Mammary epithelial cell (primary cell): ENCODE measurements at regions of chr20 and their contacts with region 1.

Region 1: DNA sequence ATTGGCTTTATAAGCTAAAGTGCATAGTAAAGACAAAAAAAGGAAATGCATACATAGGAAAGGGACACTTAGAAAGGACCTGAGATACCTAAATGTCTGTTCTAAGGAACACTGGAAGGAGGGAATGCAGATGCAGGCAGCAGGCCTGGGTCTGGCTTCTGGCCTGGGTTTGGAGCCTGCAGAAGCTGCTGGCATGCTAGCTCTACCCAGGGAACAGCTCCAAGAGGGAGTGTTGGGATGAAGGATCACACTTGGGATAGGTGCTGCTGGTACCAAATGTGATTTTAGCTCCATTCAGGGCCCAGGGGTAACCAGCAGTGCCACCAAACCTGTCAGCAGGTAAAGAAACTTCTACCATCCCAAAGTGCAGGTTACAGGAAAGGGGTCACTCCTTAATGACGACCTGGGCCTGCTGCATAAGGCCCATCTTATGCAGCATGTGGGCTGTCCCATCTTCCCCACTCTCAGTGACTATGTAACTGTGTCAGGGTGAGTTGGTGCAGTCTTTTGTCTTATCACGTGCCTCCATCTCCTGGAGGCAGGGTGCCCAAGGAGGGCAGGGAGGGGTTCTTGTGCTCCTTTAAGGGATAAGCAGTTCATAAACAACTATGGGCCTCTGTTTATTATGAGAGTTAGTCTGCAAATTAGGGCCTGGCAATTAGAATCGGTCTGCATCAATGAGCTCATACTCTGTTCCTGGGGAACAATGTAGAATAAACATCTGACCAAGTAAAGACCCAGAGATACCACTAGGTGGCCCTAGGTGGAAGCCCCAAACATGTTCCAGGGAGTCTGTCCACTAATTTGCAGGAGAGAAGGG is 26.9 kb downstream of the DDX27 start:
- DNase-seq: peak; percentile 35
- H3K4me3 ChIP-seq: no peak overlapping the region
- H3K27ac ChIP-seq: no peak overlapping the region
- H3K4me1 ChIP-seq: peaks cover 11% of the 10 kb centered on the region
- H3K27me3 ChIP-seq: no peaks in the 10 kb centered on the region
- CTCF ChIP-seq: peak; percentile 63 to 72

Region 2: DNA sequence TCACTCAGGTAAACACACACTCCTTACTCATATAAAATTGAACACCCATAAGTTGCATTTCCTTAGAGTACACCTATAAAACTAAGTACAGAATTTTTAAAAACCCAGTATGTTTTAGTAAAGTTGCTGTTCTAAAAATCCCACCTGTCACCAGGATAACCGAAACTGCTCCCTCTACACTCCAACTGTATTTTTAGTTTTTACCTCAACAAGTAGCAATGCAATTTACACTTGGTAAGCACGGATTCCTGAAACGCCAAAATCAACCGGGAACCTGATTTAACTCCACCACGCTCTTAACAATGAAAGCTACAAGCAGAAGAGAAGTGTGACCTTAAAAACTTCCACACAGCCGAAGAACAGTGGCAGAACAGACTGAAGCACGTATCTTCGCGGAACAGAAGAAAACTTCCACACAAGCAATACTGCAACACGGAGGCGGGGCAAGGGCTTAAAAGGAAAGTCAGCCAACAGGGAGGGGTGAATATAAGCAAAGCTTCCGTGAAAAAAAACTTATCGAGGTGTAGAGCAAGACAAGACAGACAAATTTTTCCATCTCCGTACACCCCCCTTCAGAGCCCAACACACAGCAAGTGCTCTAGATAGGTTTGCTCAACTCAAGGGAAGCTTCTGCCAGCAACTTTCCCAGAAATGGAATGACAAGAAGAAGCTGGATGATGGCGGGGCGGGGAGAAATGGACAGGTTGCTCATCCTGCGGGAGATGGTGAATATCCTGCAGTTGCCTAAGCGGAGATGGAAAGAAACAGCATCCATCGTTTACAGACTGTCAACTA is 59.4 kb before region 1 on chr20:
- CTCF ChIA-PET with region 1: no interaction called
- dilution Hi-C with region 1: loop called (anchors 10 kb)
- in situ Hi-C with region 1: no loop called
- intact Hi-C with region 1: no loop called
- DNase-seq: peak; percentile 66
- H3K4me3 ChIP-seq: peak overlapping the region; percentile 67 to 82 (median 79)
- H3K27ac ChIP-seq: peak overlapping the region; percentile 68
- H3K4me1 ChIP-seq: peaks cover 7% of the 10 kb centered on the region
- H3K27me3 ChIP-seq: no peaks in the 10 kb centered on the region
- CTCF ChIP-seq: no peak

Region 3: DNA sequence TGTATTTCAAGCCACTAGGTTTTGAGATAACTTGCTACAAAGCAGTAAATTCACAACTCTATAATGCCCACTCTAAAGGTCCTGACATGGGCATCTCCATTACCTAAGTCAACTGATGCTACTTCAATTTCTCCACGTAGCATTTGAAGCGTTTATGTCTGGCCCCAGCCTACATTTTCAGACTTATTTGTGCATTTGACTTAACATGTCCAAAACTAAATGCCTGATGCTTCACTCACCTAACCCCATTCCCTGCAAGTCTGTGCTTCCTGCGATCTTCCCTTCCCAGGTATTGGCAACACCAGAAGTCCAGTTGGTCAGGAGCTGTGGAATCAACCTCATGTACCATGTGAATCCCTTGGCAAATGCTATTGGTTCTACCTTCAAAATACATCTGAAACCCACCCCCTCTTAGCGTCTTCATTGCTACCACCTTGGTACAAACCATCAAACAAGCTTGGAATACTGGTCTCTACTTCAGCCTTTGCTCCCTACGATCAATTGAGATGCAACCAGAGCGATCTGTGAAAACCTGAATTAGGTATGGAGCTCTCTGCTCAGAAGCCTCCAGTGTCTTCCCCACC is 44.6 kb after region 1 on chr20:
- CTCF ChIA-PET with region 1: no interaction called
- dilution Hi-C with region 1: loop called (anchors 5 kb)
- in situ Hi-C with region 1: no loop called
- intact Hi-C with region 1: no loop called
- DNase-seq: no peak
- H3K4me3 ChIP-seq: no peak overlapping the region
- H3K27ac ChIP-seq: no peak overlapping the region
- H3K4me1 ChIP-seq: peaks cover 19% of the 10 kb centered on the region
- H3K27me3 ChIP-seq: no peaks in the 10 kb centered on the region
- CTCF ChIP-seq: no peak

Region 4: GRCh38 chr20:49323622-49324238 is 77.6 kb after region 1 on chr20:
- CTCF ChIA-PET with region 1: interaction called, 8 read pairs
- dilution Hi-C with region 1: no loop called
- in situ Hi-C with region 1: no loop called
- intact Hi-C with region 1: loop called (anchors 1 kb)
- DNase-seq: peak; percentile 73
- H3K4me3 ChIP-seq: no peak overlapping the region
- H3K27ac ChIP-seq: no peak overlapping the region
- H3K4me1 ChIP-seq: peaks cover 9% of the 10 kb centered on the region
- H3K27me3 ChIP-seq: peaks cover 16% of the 10 kb centered on the region
- CTCF ChIP-seq: peak; percentile 25 to 59

Region 5: GRCh38 chr20:49344975-49345374 is 98.8 kb after region 1 on chr20:
- CTCF ChIA-PET with region 1: no interaction called
- dilution Hi-C with region 1: no loop called
- in situ Hi-C with region 1: no loop called
- intact Hi-C with region 1: no loop called
- DNase-seq: peak; percentile 84
- H3K4me3 ChIP-seq: peak overlapping the region in 1 of 3 experiments; percentile 16
- H3K27ac ChIP-seq: peak overlapping the region; percentile 78
- H3K4me1 ChIP-seq: peaks cover 19% of the 10 kb centered on the region
- H3K27me3 ChIP-seq: no peaks in the 10 kb centered on the region
- CTCF ChIP-seq: no peak

Region 6: DNA sequence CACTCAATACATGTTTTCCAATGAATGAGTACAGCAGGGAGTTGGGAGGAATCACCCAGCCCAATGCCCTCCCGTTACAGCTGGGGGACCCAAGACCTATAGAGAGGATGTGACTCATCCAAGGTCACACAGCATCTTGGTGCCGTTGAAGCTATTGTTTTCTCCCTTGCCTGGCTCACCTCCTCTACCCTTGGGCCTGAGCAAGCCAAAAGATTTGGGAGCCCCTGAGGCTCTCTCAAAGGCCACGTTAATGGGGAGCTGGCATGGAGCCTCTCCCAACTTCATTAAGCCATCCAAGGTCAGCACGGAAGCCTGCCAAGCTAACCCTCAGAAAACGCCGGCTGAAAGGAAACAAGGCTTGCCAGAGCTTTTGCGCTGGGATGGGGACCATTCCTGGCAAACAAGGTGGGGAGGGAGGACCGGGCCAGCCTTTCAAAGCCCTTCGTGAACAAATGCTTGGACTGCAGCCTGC is 205.9 kb after region 1 on chr20:
- CTCF ChIA-PET with region 1: no interaction called
- dilution Hi-C with region 1: no loop called
- in situ Hi-C with region 1: no loop called
- intact Hi-C with region 1: no loop called
- DNase-seq: no peak
- H3K4me3 ChIP-seq: no peak overlapping the region
- H3K27ac ChIP-seq: no peak overlapping the region
- H3K4me1 ChIP-seq: peaks cover 5% of the 10 kb centered on the region
- H3K27me3 ChIP-seq: peaks cover 10% of the 10 kb centered on the region
- CTCF ChIP-seq: no peak